ENCODE measurements at regions of chr15 and their contacts with region 1.

Region 1: DNA sequence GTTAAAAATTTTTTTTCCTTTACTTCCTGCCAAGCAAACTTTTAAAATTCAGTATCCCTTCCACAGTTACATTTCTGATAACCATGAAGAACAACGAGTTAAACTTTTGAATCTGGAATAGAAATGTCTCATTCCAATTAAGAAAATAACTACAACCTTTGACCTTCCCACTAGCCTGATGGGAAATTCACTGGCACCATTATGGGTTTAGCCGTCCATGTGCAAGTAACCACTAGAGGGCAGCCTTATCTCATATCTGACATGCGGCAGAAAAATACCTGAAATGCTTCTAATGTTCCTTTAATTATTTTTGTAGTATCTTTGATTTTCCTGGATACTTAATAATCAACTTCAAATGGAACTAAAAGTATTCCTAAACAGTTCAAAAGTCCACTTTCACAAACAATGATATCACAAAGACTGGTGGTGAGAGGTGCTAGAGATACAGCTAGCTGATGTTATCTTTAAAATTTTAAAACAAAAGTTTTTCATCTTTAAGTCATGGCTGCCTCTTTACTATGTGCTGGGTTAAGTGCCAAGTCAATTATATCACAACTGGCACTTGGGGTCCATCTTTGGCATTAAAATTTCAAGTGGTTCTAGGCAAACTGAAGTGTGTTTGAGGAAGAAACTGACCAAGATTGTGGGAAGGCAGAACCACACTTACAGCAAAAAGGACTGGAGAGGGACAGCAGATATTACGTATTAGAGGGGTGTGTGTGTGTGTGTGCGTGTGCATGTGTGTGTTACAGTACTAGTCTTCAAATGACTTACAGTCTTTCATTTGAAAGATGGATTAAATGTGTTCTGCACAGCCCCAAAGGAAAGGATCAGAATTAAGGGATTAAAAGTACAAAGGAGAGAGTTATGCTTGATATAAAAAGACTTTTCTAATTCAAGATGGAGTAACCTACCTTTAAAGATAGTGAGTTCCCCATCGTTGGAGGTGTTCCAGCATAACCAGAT is 107.1 kb upstream of the ICE2 start:
- DNase-seq: no peak
- ATAC-seq: peak; percentile 34
- H3K4me3 ChIP-seq: peak overlapping the region; percentile 11
- H3K27ac ChIP-seq: peak overlapping the region; percentile 94
- H3K4me1 ChIP-seq: peaks cover 45% of the 10 kb centered on the region
- H3K27me3 ChIP-seq: no peaks in the 10 kb centered on the region
- CTCF ChIP-seq: peak; percentile 74 to 90 (median 90)
- EP300 ChIP-seq: no peak
- POLR2A ChIP-seq: no peak
- RAD21 ChIP-seq: peak; percentile 95

Region 2: DNA sequence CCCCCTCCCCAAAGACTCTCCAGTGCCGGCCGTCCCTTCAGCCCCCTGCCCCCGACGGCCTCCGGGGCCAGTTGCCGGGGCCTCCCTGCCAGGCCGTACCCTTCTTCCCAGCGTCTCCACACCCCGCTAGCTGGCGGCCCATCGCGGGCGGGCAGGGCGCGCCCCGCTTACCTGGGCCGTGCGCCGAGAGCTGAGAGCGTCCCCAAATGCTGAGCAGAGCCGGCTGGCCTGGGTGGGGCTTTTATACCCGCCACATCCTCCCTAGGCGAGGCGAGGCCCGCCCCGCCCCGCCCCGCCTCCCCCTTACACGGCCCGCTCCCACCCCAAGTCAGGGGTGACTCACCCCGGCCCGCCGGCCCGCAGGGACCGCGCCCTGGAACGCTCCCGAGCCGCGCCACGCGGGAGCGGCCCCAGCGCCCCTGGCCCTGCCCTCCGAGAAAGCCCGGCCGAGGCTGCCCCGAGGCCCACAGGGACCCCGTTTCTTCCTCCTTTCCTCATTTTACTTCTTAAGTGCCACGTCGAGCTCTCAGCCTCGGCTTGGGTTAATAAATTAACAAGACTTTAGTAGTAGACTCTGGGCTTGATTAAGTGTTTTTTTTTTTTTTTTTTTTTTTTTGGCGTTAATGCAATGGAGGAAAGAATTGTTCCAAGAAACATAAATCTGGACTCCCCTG is 188.1 kb before region 1 on chr15 and contains the start of gene ANXA2:
- CTCF ChIA-PET with region 1: interaction called, 3 read pairs
- POLR2A ChIA-PET with region 1: no interaction called
- RAD21 ChIA-PET with region 1: interaction called, 3 read pairs
- SMC1A ChIA-PET with region 1: no interaction called
- in situ Hi-C with region 1: no loop called
- intact Hi-C with region 1: loop called (anchors 10 kb)
- DNase-seq: no peak
- ATAC-seq: peak; percentile 86
- H3K4me3 ChIP-seq: peak within 1 kb of the TSS; percentile 88
- H3K27ac ChIP-seq: peak within 1 kb of the TSS; percentile 69
- H3K4me1 ChIP-seq: peaks cover 8% of the 10 kb centered on the region; the same call in 1 of the 2 replicates
- H3K27me3 ChIP-seq: no peaks in the 10 kb centered on the region
- CTCF ChIP-seq: no peak
- EP300 ChIP-seq: no peak
- POLR2A ChIP-seq: peak; percentile 96
- RAD21 ChIP-seq: no peak
- polyA plus RNA-seq, gene ANXA2: 507 to 540 TPM

Region 3: DNA sequence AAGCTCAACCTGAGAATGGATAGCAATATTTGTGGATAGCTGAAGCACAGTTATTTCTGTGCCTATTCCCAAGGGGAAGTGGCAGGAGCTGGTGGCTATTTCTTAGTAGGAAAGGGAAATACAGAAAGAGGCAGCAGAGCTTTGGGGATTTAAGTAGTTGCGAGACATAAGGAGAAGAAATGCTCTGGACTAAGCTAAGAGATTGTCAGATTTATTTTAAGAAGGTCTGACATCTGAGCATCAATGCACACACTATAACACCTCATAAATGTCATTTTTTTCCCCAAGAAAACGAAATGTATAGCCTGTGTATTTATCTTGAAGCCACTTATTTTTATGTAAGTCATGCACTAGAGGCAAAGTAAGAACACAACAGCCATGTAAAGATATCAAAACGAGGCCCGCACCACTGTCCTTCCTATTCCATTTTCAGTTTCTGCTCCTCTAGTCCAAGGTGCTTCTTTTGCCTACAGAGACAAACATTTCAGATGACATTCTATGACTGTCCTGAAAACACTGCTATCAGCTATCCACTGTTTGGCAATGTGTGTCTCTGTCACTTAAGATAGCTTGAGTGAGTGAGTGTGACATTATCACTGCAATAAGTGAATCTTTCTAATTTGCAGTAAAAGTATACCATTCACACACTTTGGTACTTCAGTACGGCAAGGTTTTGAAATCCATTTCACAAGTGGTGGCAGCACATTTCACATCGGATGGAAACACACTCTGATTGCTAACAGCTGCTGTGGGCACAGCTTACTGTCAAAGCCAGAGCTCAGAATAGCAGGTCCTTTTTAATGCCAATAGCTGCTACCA is 44.3 kb before region 1 on chr15:
- CTCF ChIA-PET with region 1: interaction called, 9 read pairs
- POLR2A ChIA-PET with region 1: interaction called, 10 read pairs
- RAD21 ChIA-PET with region 1: interaction called, 5 read pairs
- SMC1A ChIA-PET with region 1: interaction called, 13 read pairs
- in situ Hi-C with region 1: no loop called
- intact Hi-C with region 1: no loop called
- DNase-seq: no peak
- ATAC-seq: peak; percentile 18; the same call in 2 of the 3 replicates
- H3K4me3 ChIP-seq: no peak overlapping the region
- H3K27ac ChIP-seq: no peak overlapping the region
- H3K4me1 ChIP-seq: peaks cover 16% of the 10 kb centered on the region
- H3K27me3 ChIP-seq: no peaks in the 10 kb centered on the region
- CTCF ChIP-seq: no peak
- EP300 ChIP-seq: no peak
- POLR2A ChIP-seq: no peak
- RAD21 ChIP-seq: no peak

Region 4: GRCh38 chr15:60568301-60568742 is 17.7 kb before region 1 on chr15:
- CTCF ChIA-PET with region 1: interaction called, 143 read pairs
- POLR2A ChIA-PET with region 1: interaction called, 15 read pairs
- RAD21 ChIA-PET with region 1: interaction called, 309 read pairs
- SMC1A ChIA-PET with region 1: interaction called, 480 read pairs
- in situ Hi-C with region 1: no loop called
- intact Hi-C with region 1: loop called (anchors 2 kb)
- DNase-seq: peak; percentile 87
- ATAC-seq: peak; percentile 79
- H3K4me3 ChIP-seq: peak overlapping the region; percentile 26
- H3K27ac ChIP-seq: peak overlapping the region; percentile 93
- H3K4me1 ChIP-seq: peaks cover 75% of the 10 kb centered on the region
- H3K27me3 ChIP-seq: no peaks in the 10 kb centered on the region
- CTCF ChIP-seq: no peak
- EP300 ChIP-seq: peak in 1 of 2 experiments; percentile 61; a peak in 2 of 4 replicates
- POLR2A ChIP-seq: peak; percentile 79
- RAD21 ChIP-seq: no peak

Region 5: GRCh38 chr15:60720493-60721256 is 134.6 kb after region 1 on chr15:
- CTCF ChIA-PET with region 1: no interaction called
- POLR2A ChIA-PET with region 1: interaction called, 3 read pairs
- RAD21 ChIA-PET with region 1: no interaction called
- SMC1A ChIA-PET with region 1: no interaction called
- in situ Hi-C with region 1: no loop called
- intact Hi-C with region 1: loop called (anchors 2 kb)
- DNase-seq: peak; percentile 67
- ATAC-seq: peak; percentile 88
- H3K4me3 ChIP-seq: peak overlapping the region; percentile 48; the same call in 1 of the 2 replicates
- H3K27ac ChIP-seq: peak overlapping the region; percentile 68
- H3K4me1 ChIP-seq: peaks cover 35% of the 10 kb centered on the region
- H3K27me3 ChIP-seq: no peaks in the 10 kb centered on the region
- CTCF ChIP-seq: no peak
- EP300 ChIP-seq: peak; percentile 28 to 54; a peak in 3 of 4 replicates
- POLR2A ChIP-seq: no peak
- RAD21 ChIP-seq: no peak; the same call in 1 of the 2 replicates

Region 6: GRCh38 chr15:60899322-60899966 is 313.4 kb after region 1 on chr15:
- CTCF ChIA-PET with region 1: interaction called, 82 read pairs
- POLR2A ChIA-PET with region 1: interaction called, 5 read pairs
- RAD21 ChIA-PET with region 1: interaction called, 16 read pairs
- SMC1A ChIA-PET with region 1: interaction called, 22 read pairs
- in situ Hi-C with region 1: no loop called
- intact Hi-C with region 1: loop called (anchors 5 kb)
- DNase-seq: peak; percentile 76
- ATAC-seq: peak; percentile 79
- H3K4me3 ChIP-seq: no peak overlapping the region
- H3K27ac ChIP-seq: peak overlapping the region; percentile 60; the same call in 1 of the 2 replicates
- H3K4me1 ChIP-seq: peaks cover 45% of the 10 kb centered on the region
- H3K27me3 ChIP-seq: no peaks in the 10 kb centered on the region
- CTCF ChIP-seq: no peak
- EP300 ChIP-seq: peak; percentile 76 to 87; a peak in 3 of 4 replicates
- POLR2A ChIP-seq: no peak
- RAD21 ChIP-seq: no peak

Region 7: GRCh38 chr15:60932051-60932915 is 346.3 kb after region 1 on chr15:
- CTCF ChIA-PET with region 1: interaction called, 11 read pairs
- POLR2A ChIA-PET with region 1: no interaction called
- RAD21 ChIA-PET with region 1: interaction called, 9 read pairs
- SMC1A ChIA-PET with region 1: interaction called, 15 read pairs
- in situ Hi-C with region 1: no loop called
- intact Hi-C with region 1: no loop called
- DNase-seq: no peak
- ATAC-seq: peak; percentile 66
- H3K4me3 ChIP-seq: no peak overlapping the region
- H3K27ac ChIP-seq: no peak overlapping the region
- H3K4me1 ChIP-seq: no peaks in the 10 kb centered on the region
- H3K27me3 ChIP-seq: peaks cover 0 to 4% of the 10 kb centered on the region in 2 experiments; a peak in 2 of 4 replicates
- CTCF ChIP-seq: peak; percentile 25 to 44 (median 34); a peak in 5 of 6 replicates
- EP300 ChIP-seq: no peak
- POLR2A ChIP-seq: no peak
- RAD21 ChIP-seq: peak; percentile 72